Activated CD8-positive, alpha-beta T cell treated with anti-CD3 and anti-CD28 coated beads, Interleukin-2, amount 10 ng/mL, durations not matched to agents 7 days and 5 days (primary cell): ENCODE measurements at regions of chr19 and their contacts with region 1.

Region 1: DNA sequence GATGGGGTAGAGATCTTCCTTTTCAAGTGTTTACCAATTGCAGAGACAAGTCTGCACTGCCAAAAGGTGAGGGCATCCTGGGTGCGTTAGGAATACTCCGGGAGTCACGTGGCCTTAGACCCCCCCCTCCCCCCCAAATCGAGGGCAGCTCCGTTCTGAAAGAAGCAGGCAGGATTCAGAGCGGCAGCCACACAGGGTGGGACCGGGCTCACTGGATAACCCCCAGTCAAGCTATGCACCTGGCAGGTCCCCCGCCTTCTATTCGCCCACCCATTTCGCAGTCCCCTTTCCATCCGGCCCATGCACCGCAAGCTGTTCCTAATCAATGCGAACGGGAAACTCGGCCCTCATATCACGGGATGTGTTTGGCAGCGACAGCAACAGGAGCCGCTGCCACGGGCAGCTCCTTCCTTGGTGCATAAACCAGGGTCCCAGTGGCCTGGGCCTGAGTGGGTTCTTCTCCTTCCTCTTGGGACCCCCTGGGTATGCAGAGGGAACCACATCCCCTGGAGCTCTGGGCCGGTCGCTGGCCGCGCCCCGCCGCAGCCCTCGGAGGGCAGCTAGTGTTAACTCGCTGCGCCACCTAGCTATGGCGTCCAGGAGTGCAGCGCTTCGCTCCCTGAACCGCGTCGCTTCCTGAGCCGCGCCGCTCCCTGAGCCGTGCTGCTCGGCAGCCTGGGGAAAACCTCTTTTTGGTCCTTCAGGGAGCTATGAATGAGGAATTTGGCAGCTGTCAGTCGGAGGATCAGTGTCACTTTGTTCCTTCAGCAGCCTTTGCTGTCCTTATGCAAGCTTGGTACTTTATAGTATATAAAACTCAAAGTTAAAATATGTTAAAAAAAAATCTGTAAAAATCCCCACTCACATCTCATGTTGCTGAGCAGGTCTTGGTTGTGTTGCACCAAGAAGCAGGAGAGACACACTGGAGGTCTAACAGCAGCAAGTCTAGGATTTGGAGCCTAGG is 41.4 kb downstream of the LYL1 start:
- DNase-seq: peak; percentile 85
- ATAC-seq: peak; percentile 98
- H3K4me3 Mint-ChIP-seq: peak overlapping the region; percentile 68
- H3K27ac Mint-ChIP-seq: no peak overlapping the region
- H3K4me1 Mint-ChIP-seq: peaks cover 9% of the 10 kb centered on the region
- H3K27me3 Mint-ChIP-seq: peaks cover 24% of the 10 kb centered on the region

Region 2: GRCh38 chr19:12974301-12975220 is 86.7 kb before region 1 on chr19:
- CTCF ChIA-PET with region 1: interaction called, 82 read pairs
- POLR2A ChIA-PET with region 1: no interaction called
- DNase-seq: no peak
- ATAC-seq: no peak
- H3K4me3 Mint-ChIP-seq: no peak overlapping the region
- H3K27ac Mint-ChIP-seq: no peak overlapping the region
- H3K4me1 Mint-ChIP-seq: no peaks in the 10 kb centered on the region
- H3K27me3 Mint-ChIP-seq: peaks cover 8% of the 10 kb centered on the region

Region 3: DNA sequence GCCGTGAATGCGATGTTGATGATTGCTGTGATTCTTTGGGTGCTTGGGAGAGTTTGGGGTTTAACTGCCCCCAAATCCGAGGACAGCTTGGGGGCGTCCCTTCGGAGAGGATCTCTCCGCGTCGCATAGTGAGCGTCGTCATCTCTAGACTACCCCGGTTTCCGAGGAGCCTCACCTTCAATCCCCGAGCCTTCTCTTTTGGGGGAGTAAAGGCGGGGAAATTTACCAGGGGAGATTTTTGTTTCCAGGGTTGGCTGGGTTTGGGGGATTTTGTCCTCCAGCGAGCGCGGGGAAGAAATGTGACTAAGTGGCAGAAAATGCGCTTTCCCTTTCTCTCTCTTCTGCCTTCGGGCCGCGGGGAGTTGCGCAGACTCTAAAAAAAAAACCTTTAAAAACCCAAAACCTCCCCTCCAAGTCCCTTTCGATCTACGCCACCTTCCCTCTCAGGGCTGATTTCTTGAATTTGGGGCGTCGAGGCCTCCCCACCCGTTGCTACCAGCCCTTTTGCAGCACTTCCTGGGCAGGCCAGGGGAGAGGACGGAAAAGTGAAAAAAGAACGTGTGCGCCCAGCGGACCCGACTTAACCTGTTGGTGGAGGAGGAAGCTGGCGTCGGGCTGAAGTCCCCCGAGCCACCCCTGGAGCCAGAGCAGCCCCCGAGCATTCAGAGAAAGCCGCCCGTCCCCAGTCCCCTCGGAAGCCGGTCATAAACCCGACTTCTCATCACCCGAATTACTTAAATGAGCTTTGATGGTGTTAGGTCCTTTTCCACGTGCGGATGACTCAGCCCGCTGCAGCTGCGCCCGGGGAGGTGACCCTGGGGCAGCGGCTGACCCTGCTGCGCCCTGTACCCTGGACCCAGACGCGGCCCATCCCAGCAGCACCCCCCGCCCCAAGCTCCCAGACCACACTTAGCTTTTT is 48.3 kb before region 1 on chr19:
- CTCF ChIA-PET with region 1: interaction called, 16 read pairs
- POLR2A ChIA-PET with region 1: no interaction called
- DNase-seq: peak; percentile 49
- ATAC-seq: peak; percentile 35
- H3K4me3 Mint-ChIP-seq: peak overlapping the region; percentile 74
- H3K27ac Mint-ChIP-seq: no peak overlapping the region
- H3K4me1 Mint-ChIP-seq: peaks cover 21% of the 10 kb centered on the region
- H3K27me3 Mint-ChIP-seq: peaks cover 78% of the 10 kb centered on the region

Region 4: GRCh38 chr19:13033819-13034611 is 27.2 kb before region 1 on chr19:
- CTCF ChIA-PET with region 1: interaction called, 47 read pairs
- POLR2A ChIA-PET with region 1: no interaction called
- DNase-seq: peak; percentile 59
- ATAC-seq: peak; percentile 86
- H3K4me3 Mint-ChIP-seq: no peak overlapping the region
- H3K27ac Mint-ChIP-seq: no peak overlapping the region
- H3K4me1 Mint-ChIP-seq: peaks cover 4% of the 10 kb centered on the region
- H3K27me3 Mint-ChIP-seq: no peaks in the 10 kb centered on the region

Region 5: DNA sequence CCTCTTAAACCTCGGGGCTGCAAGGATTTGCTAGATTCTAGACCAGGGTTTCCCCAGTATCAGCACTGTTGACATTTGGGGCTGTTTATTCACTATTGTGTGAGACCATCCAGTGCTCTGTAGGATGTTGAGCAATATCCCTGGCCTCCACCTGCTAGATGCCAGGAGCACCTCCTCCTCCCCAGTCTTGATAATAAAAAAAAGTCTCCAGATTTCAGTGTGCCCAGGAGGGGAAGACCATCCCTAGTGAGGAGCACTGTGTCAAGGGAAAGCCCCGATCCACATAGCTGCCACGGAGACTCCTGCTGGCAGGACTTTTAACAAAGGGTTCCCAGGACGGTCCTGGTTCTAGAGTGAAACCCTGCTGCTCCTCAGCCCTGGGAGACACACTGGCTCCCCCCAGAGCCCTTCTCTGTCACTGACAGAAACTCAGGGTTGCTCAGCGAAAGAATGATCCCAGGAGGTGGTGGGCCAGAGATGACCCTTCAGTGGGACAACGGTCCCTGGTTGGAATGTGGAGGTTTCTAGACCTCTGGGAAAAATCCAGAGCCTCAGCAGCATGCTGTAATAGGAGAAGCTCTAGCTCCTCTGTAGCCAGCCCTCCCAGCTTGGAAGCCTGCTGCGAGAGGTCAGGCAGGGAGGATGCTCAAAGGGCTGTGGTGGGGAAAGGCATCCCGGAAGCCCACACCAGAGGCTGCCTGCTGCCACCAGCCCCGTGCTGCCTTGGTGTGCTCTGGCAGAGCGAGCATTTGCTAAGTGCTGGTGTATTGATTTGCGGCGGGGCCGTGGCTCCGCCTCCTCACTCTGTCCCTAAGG is 21.2 kb after region 1 on chr19:
- CTCF ChIA-PET with region 1: interaction called, 15 read pairs
- POLR2A ChIA-PET with region 1: no interaction called
- DNase-seq: no peak
- ATAC-seq: no peak
- H3K4me3 Mint-ChIP-seq: no peak overlapping the region
- H3K27ac Mint-ChIP-seq: no peak overlapping the region
- H3K4me1 Mint-ChIP-seq: no peaks in the 10 kb centered on the region
- H3K27me3 Mint-ChIP-seq: peaks cover 5% of the 10 kb centered on the region